Tibial artery (tissue), 4 donors: ENCODE measurements at regions of chr2 and their contacts with region 1.

Region 1: GRCh38 chr2:179340668-179341067 is 76.0 kb upstream of the SESTD1 start:
- DNase-seq: no peak
- H3K4me3 ChIP-seq: no peak overlapping the region
- H3K27ac ChIP-seq: no peak overlapping the region
- H3K4me1 ChIP-seq: peaks cover 0 to 48% (median 28%) of the 10 kb centered on the region in 4 donors
- H3K27me3 ChIP-seq: no peaks in the 10 kb centered on the region
- CTCF ChIP-seq: peak in 1 of 2 experiments; percentile 15

Region 2: GRCh38 chr2:179268299-179268801 is 72.3 kb before region 1 on chr2:
- intact Hi-C with region 1: loop called (anchors 1 kb)
- DNase-seq: peak; percentile 53 to 71
- H3K4me3 ChIP-seq: no peak overlapping the region
- H3K27ac ChIP-seq: peak overlapping the region; percentile 22 to 29
- H3K4me1 ChIP-seq: peaks cover 0 to 51% (median 20%) of the 10 kb centered on the region in 4 donors
- H3K27me3 ChIP-seq: no peaks in the 10 kb centered on the region
- CTCF ChIP-seq: no peak